T-cell (primary cell): ENCODE measurements at regions of chrX and their contacts with region 1.

Region 1: DNA sequence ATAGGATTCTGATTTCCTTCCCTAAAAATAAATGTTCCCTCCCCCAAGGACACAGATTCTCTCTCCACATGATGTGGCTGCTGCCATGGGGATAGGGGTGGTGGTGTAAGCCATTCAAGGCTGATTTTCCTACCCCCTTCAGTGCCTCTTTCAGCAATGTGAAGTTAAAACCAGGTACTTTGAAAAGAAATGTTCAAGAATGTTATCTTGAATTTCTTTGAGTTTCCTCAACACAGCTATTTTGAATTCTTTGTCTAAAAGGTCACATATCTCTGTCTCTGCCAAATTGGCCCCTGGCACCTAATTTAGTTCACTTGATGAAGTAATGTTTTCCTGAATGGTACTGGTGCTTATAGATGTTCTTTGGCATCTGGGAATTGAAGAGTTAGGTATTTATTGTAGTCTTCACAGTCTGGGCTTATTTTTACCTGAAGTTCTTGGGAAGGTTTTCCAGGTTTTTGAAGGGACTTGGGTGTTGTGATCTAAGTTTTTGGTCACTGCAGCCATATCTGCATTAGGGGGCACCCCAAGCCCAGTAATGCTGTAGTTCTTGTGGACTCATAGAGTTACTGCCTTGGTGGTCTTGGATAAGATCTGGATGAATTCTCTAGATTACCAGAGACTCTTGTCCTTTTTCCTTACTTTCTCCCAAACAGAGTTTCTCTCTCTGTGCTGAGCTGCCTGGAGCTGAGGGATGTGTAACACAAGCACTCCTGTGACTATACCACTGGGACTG is 7.6 kb upstream of the DIPK2B start:
- DNase-seq: no peak
- ATAC-seq: no peak
- H3K4me3 ChIP-seq: no peak overlapping the region
- H3K4me3 Mint-ChIP-seq: no peak overlapping the region
- H3K27ac ChIP-seq: no peak overlapping the region
- H3K27ac Mint-ChIP-seq: no peak overlapping the region
- H3K4me1 ChIP-seq: no peaks in the 10 kb centered on the region
- H3K4me1 Mint-ChIP-seq: no peaks in the 10 kb centered on the region
- H3K27me3 ChIP-seq: no peaks in the 10 kb centered on the region
- H3K27me3 Mint-ChIP-seq: peaks cover 10 to 29% of the 10 kb centered on the region in 2 donors

Region 2: DNA sequence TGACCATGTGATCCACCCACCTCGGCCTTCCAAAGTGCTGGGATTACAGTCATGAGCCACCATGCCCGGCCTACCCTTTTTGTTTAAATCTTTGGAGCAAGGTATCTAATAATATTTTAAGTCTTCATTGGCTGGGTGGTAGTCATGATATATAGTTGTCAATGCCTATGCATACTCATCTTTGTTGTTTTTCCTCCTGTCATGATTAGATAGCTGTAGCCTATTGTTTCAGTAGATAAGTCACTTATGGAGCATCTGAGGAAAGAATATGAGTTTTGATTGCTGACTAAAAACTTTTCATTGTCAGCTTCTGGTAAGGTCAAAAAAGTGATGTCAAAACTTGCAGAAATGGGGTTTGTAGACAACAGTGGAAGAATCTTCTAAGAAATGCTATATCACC is 215.5 kb before region 1 on chrX:
- CTCF ChIA-PET with region 1: interaction called in 1 of 2 experiments, 10 read pairs
- POLR2A ChIA-PET with region 1: no interaction called
- DNase-seq: no peak
- ATAC-seq: no peak
- H3K4me3 ChIP-seq: no peak overlapping the region
- H3K4me3 Mint-ChIP-seq: no peak overlapping the region
- H3K27ac ChIP-seq: no peak overlapping the region
- H3K27ac Mint-ChIP-seq: no peak overlapping the region
- H3K4me1 ChIP-seq: peaks cover 9 to 12% of the 10 kb centered on the region in 2 experiments
- H3K4me1 Mint-ChIP-seq: peaks cover 62 to 78% (median 76%) of the 10 kb centered on the region in 3 donors
- H3K27me3 ChIP-seq: no peaks in the 10 kb centered on the region
- H3K27me3 Mint-ChIP-seq: no peaks in the 10 kb centered on the region

Region 3: DNA sequence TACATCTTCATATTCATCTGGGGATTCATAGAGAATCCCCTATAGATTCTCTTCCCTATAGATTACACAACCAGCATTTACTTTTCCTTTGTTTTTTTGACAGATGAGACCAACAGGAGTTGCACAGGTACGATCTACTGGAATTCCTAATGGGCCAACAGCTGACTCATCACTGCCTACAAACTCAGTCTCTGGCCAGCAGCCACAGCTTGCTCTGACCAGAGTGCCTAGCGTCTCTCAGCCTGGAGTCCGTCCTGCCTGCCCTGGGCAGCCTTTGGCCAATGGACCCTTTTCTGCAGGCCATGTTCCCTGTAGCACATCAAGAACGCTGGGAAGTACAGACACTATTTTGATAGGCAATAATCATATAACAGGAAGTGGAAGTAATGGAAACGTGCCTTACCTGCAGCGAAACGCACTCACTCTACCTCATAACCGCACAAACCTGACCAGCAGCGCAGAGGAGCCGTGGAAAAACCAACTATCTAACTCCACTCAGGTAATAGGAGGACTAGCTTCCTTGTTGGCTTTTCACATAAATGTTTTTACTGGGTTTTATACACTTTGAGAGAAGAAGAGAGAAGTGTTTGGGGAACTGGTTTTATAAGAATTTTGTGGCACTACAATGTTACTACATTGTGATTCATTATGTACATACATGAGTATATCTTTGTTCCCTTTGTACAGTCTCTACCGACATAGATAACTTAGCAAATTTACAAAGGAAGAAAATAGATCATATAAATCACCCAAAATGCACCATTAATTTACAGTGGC is 144.8 kb before region 1 on chrX:
- CTCF ChIA-PET with region 1: no interaction called
- POLR2A ChIA-PET with region 1: no interaction called
- DNase-seq: no peak
- ATAC-seq: no peak
- H3K4me3 ChIP-seq: no peak overlapping the region
- H3K4me3 Mint-ChIP-seq: no peak overlapping the region
- H3K27ac ChIP-seq: no peak overlapping the region
- H3K27ac Mint-ChIP-seq: no peak overlapping the region
- H3K4me1 ChIP-seq: peaks cover 2 to 3% of the 10 kb centered on the region in 2 experiments
- H3K4me1 Mint-ChIP-seq: peaks cover 27 to 28% (median 27%) of the 10 kb centered on the region in 3 donors
- H3K27me3 ChIP-seq: no peaks in the 10 kb centered on the region
- H3K27me3 Mint-ChIP-seq: no peaks in the 10 kb centered on the region

Region 4: DNA sequence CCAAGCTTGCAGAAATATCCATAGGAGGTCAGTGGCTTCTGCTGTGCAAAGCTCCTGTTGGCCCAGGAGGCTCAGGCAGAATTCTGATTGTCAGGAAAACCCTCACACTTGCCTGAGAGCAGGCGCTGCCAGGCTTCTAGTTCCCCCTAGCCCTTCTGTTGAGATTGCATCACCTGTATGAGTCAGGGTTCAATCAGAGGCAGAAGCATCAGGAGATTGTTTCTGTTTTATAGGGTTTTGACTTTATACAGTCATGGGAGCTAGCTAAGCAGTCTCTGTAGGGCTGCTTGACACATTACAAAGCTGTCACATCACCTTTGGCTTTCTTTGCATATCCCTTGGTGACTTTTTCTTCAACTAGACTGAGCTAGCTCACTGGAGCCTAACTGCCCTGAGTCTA is 35.4 kb before region 1 on chrX:
- CTCF ChIA-PET with region 1: no interaction called
- POLR2A ChIA-PET with region 1: no interaction called
- DNase-seq: no peak
- ATAC-seq: no peak
- H3K4me3 ChIP-seq: no peak overlapping the region
- H3K4me3 Mint-ChIP-seq: no peak overlapping the region
- H3K27ac ChIP-seq: no peak overlapping the region
- H3K27ac Mint-ChIP-seq: no peak overlapping the region
- H3K4me1 ChIP-seq: no peaks in the 10 kb centered on the region
- H3K4me1 Mint-ChIP-seq: no peaks in the 10 kb centered on the region
- H3K27me3 ChIP-seq: no peaks in the 10 kb centered on the region
- H3K27me3 Mint-ChIP-seq: peaks cover 0 to 18% of the 10 kb centered on the region in 2 donors

Region 5: DNA sequence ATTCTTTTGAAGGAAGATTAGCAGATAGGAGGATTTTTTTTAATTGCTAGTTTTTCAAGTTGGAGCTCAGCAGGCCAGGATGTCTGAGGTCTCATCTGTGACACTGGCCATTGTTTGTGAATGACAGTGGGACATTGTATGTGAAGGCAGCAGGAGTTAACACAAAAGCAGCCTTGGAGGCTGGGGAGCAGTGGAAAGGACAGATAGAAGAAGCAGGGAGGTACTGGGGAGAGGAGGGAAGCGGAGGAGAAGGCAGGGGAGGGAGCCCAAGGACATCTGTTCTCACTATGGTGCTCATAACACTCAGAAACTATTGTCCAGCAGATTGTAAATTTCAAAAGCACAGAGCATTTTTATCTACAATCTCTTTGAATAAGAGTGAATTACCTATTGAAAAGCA is 246.0 kb after region 1 on chrX:
- CTCF ChIA-PET with region 1: no interaction called
- POLR2A ChIA-PET with region 1: no interaction called
- DNase-seq: no peak
- ATAC-seq: no peak
- H3K4me3 ChIP-seq: no peak overlapping the region
- H3K4me3 Mint-ChIP-seq: no peak overlapping the region
- H3K27ac ChIP-seq: no peak overlapping the region
- H3K27ac Mint-ChIP-seq: no peak overlapping the region
- H3K4me1 ChIP-seq: no peaks in the 10 kb centered on the region
- H3K4me1 Mint-ChIP-seq: no peaks in the 10 kb centered on the region
- H3K27me3 ChIP-seq: no peaks in the 10 kb centered on the region
- H3K27me3 Mint-ChIP-seq: peaks cover 0 to 10% of the 10 kb centered on the region in 2 donors